ENCODE measurements at regions of chr20 and their contacts with region 1.

Region 1: DNA sequence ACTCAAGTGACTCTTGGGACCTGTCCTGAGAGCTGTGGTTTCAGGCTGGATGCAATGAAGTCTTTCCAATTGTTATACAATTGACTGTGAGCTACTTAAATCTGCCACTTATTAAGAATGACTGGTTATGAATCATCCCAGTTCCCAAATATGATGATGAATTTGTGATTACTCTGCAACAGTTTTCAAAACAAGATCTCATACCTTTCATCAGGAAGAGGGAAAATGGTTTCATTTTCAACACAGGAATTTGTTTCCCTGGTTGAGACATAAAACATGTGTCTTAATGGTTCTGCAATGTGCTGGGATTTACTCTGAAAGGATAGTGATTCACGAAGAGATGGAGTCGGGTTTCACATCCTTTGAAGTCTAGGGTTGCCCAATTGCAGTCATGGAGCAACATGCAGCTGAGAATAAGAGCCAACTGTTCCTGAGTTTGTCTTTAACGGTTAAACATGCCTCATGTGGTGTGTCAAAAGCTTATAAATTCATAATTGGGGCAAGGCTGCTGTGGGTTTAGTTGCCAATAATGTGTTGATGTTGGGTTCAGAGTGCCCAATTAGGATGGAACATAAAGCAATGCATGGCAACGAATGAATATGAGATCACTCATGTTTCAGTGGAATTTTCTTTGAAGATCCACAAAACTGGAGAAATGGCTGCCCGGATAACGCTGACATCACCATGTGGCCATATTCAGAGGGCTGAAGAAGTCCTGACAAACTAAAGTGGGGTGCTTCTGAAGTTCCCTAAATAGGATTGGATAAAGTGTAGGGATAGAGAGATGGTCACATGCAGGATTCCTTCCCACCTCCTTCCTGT is 41.0 kb downstream of the CYP24A1 start:
- DNase-seq: peak; percentile 100
- ATAC-seq: peak; percentile 93
- H3K4me3 ChIP-seq: peak overlapping the region; percentile 0 to 54 (median 7); a peak in 2 of 6 replicates
- H3K27ac ChIP-seq: peak overlapping the region; percentile 99
- H3K4me1 ChIP-seq: peaks cover 56% of the 10 kb centered on the region
- H3K27me3 ChIP-seq: no peaks in the 10 kb centered on the region
- CTCF ChIP-seq: no peak
- EP300 ChIP-seq: peak; percentile 99
- POLR2A ChIP-seq: peak; percentile 9 to 80; a peak in 3 of 4 replicates
- RAD21 ChIP-seq: peak; percentile 63

Region 2: DNA sequence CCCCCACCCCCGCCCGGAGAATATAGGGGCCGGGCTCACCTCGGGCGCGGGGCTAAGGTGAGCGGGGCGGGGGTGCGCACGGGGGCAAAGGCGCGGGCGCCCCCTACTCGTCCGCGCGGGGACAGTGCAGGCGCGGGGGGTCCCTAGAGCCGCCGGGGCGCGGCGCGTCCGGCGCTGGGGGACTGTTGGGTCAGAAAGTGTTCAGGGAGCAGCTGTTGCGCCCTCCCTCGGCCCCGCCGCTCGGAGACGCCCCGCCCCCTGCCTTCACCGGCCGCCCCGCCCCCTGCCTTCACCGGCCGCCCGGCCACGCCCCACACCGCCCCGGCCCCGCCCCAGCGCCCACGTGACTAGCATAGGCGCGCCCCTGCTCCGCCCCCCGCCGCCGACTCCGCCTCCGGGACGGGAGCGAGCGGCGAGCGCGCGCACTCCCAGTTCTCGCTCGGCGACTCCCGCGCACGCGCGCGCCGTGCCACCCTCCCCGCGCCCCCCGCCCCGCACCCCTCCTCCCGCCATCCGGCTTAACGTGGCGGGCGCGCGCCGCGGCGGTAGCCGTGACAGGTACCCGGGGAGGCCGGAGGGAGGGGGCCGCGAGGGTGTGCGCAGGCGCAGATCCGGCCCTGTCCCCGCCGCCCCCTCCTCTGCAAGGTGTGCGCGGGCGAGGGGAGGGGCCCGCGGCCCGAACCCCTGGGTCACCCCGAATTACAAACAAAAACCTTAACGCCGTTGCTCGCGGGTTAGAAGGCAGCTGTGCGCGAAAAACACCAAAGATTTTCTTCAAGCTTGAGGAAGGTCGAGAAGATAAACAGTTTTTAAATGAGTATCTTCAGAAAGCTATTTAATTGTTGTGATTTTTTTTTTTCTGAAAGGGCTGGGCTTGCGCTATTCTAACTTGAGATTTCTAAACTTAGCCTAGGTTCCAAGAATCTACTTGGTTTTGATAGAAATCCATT is 538.5 kb before region 1 on chr20:
- CTCF ChIA-PET with region 1: no interaction called
- POLR2A ChIA-PET with region 1: interaction called, 13 read pairs
- in situ Hi-C with region 1: no loop called
- intact Hi-C with region 1: no loop called
- DNase-seq: peak; percentile 89
- ATAC-seq: peak; percentile 88
- H3K4me3 ChIP-seq: peak overlapping the region; percentile 89 to 98 (median 90)
- H3K27ac ChIP-seq: peak overlapping the region; percentile 87
- H3K4me1 ChIP-seq: peaks cover 43% of the 10 kb centered on the region
- H3K27me3 ChIP-seq: no peaks in the 10 kb centered on the region; a peak in 1 of 5 replicates
- CTCF ChIP-seq: peak; percentile 88
- EP300 ChIP-seq: peak in 1 of 2 experiments; percentile 14; a peak in 1 of 4 replicates
- POLR2A ChIP-seq: peak; percentile 52 to 60
- RAD21 ChIP-seq: peak; percentile 91

Region 3: DNA sequence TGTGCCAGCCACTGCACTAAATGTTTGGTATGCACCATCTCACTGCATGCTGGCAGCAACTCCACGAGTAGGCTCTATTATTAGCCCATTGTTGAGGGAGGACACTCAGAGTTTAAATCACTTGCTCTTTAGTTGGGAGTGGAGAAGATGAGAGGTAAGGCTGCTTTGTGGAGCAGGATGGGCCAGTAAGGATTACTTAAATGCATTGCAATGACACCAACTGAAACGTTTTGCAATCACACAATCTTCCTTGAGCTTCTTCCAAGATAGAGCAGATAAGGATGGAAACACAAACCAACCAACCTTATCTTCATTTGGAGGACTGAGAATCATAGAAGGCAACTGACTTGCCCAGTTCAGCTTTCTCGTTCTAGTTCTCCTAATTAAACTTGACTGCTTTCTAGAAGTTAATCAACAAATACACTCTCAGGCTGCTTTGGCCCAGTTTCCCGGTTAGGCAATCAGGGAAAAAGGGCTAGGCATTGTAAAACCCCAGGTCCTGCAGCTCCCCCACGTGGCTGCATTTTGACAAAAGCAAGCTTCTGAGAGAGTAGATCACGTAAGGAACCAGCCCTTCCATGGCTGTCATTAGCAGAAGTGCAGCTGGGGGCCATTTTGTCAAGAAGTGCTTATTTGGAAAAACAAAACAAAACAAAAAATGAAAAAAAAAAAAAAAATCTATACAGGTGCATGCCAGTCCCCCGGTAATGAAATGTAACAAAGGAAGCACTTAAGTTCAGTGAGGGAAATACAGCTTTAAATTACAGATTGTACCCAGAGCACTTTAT is 193.1 kb before region 1 on chr20:
- CTCF ChIA-PET with region 1: no interaction called
- POLR2A ChIA-PET with region 1: no interaction called
- in situ Hi-C with region 1: no loop called
- intact Hi-C with region 1: no loop called
- DNase-seq: peak; percentile 95
- ATAC-seq: peak; percentile 91
- H3K4me3 ChIP-seq: no peak overlapping the region; a peak in 1 of 6 replicates
- H3K27ac ChIP-seq: no peak overlapping the region
- H3K4me1 ChIP-seq: peaks cover 83% of the 10 kb centered on the region
- H3K27me3 ChIP-seq: no peaks in the 10 kb centered on the region; a peak in 1 of 5 replicates
- CTCF ChIP-seq: peak; percentile 94
- EP300 ChIP-seq: no peak
- POLR2A ChIP-seq: no peak
- RAD21 ChIP-seq: peak; percentile 95

Region 4: DNA sequence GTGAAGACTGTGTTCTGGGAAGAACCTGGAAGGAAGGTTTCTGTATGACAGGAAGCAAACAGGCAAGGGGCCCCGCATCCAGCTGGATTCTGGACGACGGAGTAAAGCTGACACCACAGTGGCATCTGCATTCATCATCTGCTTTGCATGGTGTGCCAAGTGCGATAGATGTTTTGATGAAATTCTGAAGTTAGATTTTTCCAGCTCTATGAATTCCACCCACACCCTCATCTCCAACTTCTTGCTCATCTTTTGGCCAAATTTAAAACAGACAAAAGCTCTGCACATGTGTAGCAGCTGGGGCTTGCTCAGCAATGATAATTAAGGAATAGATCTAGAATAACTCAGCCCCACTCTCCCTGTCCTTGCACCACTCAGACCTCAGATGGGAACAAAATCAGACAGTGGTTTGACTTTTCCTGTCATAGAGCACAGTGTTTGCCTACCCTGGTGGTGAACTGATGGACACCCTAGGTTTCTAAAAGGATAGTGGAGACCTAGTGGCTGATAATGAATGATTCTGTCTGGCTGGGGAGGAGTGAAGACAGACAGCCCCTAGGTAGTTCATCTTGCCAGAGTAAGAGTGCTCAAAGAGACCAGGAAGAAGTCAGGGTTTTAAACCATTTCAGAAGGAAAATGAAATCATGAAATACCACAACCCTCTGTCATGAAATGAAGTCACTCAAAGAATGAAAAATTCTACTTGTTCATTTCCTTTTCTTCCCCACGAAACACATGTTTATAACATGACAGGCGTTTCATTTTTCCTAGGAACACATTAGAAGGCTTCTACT is 148.3 kb before region 1 on chr20:
- CTCF ChIA-PET with region 1: no interaction called
- POLR2A ChIA-PET with region 1: no interaction called
- in situ Hi-C with region 1: no loop called
- intact Hi-C with region 1: no loop called
- DNase-seq: no peak
- ATAC-seq: no peak
- H3K4me3 ChIP-seq: no peak overlapping the region
- H3K27ac ChIP-seq: no peak overlapping the region
- H3K4me1 ChIP-seq: no peaks in the 10 kb centered on the region
- H3K27me3 ChIP-seq: no peaks in the 10 kb centered on the region
- CTCF ChIP-seq: no peak
- EP300 ChIP-seq: no peak
- POLR2A ChIP-seq: no peak
- RAD21 ChIP-seq: no peak

Region 5: DNA sequence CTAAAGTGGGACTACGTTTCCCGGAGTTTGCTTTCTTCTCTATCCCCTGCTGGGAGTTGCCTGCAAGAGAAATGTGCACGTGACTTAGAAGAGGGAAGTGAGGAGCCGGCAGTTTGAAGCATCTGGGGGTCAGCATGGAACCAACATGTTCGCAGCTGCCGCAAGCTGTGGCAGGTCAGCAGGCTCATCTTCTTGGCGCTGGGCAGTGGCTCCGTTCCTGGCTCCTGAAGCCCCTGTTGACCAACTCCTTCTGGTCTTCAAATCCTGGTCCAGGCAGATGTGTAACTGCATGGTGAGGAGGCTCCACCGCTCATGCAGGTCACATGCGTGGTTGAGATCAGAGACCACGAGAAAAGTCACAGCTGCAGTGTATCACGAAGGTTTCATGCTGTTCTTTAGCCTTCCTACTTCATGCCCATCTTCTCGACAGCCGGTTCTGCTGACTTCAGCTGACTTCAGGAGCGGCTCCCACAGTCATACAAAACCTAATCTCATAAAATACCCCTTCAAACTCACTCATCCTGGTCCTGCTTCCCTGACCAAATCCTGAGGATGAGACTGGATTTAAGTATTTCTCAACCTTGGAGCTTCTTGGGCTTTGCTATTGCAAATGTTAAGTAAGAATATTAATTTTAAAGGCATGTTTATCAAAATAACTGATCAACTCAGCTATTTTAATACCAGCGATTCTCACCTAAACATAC is 17.5 kb before region 1 on chr20:
- CTCF ChIA-PET with region 1: no interaction called
- POLR2A ChIA-PET with region 1: interaction called, 287 read pairs
- in situ Hi-C with region 1: no loop called
- intact Hi-C with region 1: no loop called
- DNase-seq: no peak
- ATAC-seq: peak; percentile 31
- H3K4me3 ChIP-seq: no peak overlapping the region; a peak in 1 of 6 replicates
- H3K27ac ChIP-seq: peak overlapping the region; percentile 83
- H3K4me1 ChIP-seq: peaks cover 96% of the 10 kb centered on the region
- H3K27me3 ChIP-seq: no peaks in the 10 kb centered on the region
- CTCF ChIP-seq: no peak
- EP300 ChIP-seq: no peak
- POLR2A ChIP-seq: no peak
- RAD21 ChIP-seq: 0 out of 2 replicates have a peak, but pooled peaks have one; percentile 17

Region 6: GRCh38 chr20:54167909-54168872 is 35.4 kb after region 1 on chr20:
- CTCF ChIA-PET with region 1: no interaction called
- POLR2A ChIA-PET with region 1: interaction called, 19 read pairs
- in situ Hi-C with region 1: no loop called
- intact Hi-C with region 1: loop called (anchors 2 kb)
- DNase-seq: peak; percentile 47
- ATAC-seq: peak; percentile 17; the same call in 2 of the 3 replicates
- H3K4me3 ChIP-seq: no peak overlapping the region
- H3K27ac ChIP-seq: no peak overlapping the region
- H3K4me1 ChIP-seq: peaks cover 47% of the 10 kb centered on the region
- H3K27me3 ChIP-seq: no peaks in the 10 kb centered on the region
- CTCF ChIP-seq: no peak
- EP300 ChIP-seq: no peak
- POLR2A ChIP-seq: no peak
- RAD21 ChIP-seq: no peak

Region 7: DNA sequence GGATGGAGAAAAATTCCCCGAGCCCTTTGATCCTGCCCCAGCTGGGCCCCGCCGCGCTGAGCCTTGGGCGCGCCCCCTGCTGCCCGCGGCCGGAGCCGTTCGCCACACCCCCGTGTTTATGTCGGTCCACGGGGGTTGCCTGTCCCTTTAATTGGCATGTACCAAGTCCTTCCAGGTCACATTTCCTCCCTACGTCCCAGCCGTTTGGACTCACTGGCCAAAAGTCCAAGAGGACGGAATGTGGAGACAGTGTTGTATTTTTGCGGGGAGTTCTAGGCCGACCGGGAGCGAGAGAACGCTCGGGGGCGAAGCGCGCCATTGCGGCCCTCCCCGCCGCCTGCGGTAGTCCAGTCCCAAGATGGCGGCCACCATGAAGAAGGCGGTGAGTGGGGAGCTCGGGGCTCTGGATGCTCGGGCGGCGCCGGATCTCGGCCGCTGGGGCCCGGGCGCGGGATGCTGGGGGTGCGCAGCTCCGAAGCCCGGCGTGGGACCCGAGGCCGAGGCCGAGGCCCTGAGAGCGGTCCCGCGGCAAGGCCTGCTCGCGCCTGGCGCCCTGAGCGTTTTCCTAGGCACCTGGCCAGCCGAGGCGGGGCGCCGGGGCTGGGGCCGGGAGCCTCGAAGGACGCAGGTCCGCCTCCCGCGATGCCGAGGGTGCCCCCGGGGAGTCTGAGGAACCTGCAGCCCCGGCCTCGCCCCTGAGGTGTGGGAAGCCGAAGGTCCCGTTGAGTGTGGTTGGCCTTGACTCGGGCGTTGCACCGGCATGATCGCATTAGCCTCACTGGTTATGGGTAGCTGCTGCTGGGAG is 75.1 kb after region 1 on chr20 and contains the start of gene PFDN4:
- CTCF ChIA-PET with region 1: no interaction called
- POLR2A ChIA-PET with region 1: interaction called, 11 read pairs
- in situ Hi-C with region 1: no loop called
- intact Hi-C with region 1: no loop called
- DNase-seq: peak; percentile 88
- ATAC-seq: peak; percentile 95
- H3K4me3 ChIP-seq: peak within 1 kb of the TSS; percentile 77 to 100 (median 82)
- H3K27ac ChIP-seq: peak within 1 kb of the TSS; percentile 97
- H3K4me1 ChIP-seq: peaks cover 50% of the 10 kb centered on the region
- H3K27me3 ChIP-seq: peaks cover 0 to 6% of the 10 kb centered on the region in 2 experiments; a peak in 1 of 5 replicates
- CTCF ChIP-seq: peak; percentile 99
- EP300 ChIP-seq: peak; percentile 43 to 61; a peak in 3 of 4 replicates
- POLR2A ChIP-seq: peak; percentile 59 to 80; a peak in 3 of 4 replicates
- RAD21 ChIP-seq: peak; percentile 63
- total RNA-seq, gene PFDN4: 227 and 299 TPM in 2 replicates